Activated T-helper 1 cell treated with anti-CD3 and anti-CD28 coated beads, Interleukin-12 subunit alpha, Interleukin-12 subunit beta, Interleukin-2, Interleukin-4 antibody, amounts not matched to agents 30 ng/mL and 10 ng/mL and 1 ng/mL, durations not matched to agents 14 hours and 24 hours and 36 hours (primary cell): ENCODE measurements at regions of chr19 and their contacts with region 1.

Region 1: GRCh38 chr19:11558881-11559828 is at the start of gene ELOF1:
- DNase-seq: peak; percentile 97
- H3K4me3 Mint-ChIP-seq: peak within 1 kb of the TSS; percentile 92
- H3K27ac Mint-ChIP-seq: peak within 1 kb of the TSS; percentile 96
- H3K4me1 Mint-ChIP-seq: peaks cover 42% of the 10 kb centered on the region
- H3K27me3 Mint-ChIP-seq: no peaks in the 10 kb centered on the region
- total RNA-seq, gene ELOF1: 76.7 and 77.6 TPM in 2 replicates

Region 2: GRCh38 chr19:11528551-11529341 is 30.4 kb before region 1 on chr19 and contains the start of gene ECSIT:
- intact Hi-C with region 1: loop called (anchors 1 kb)
- DNase-seq: peak; percentile 89
- H3K4me3 Mint-ChIP-seq: peak within 1 kb of the TSS; percentile 95
- H3K27ac Mint-ChIP-seq: peak within 1 kb of the TSS; percentile 92
- H3K4me1 Mint-ChIP-seq: peaks cover 28% of the 10 kb centered on the region
- H3K27me3 Mint-ChIP-seq: no peaks in the 10 kb centered on the region
- total RNA-seq, gene ECSIT: 37.3 and 38.8 TPM in 2 replicates

Region 3: DNA sequence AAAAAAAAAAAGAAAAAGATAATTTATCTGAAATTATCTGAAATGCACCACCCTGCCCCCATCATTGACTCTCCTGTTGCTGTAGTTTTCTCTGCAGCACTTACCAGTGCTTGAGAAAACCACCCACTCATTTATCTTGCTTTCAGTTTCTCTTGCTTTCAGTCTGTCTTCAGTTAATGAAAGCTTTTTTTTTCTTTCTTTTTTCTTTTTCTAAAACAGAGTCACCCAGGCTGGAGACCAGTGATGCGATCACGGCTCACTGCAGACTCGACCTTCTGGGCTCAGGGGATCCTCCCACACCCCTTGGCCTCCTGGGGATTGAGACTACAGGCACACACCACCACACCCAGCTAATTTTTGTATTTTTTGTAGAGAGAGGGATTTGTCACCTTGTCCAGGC is 22.6 kb after region 1 on chr19:
- intact Hi-C with region 1: loop called (anchors 1 kb)
- DNase-seq: peak; percentile 24
- H3K4me3 Mint-ChIP-seq: peak overlapping the region; percentile 75
- H3K27ac Mint-ChIP-seq: peak overlapping the region; percentile 87
- H3K4me1 Mint-ChIP-seq: peaks cover 21% of the 10 kb centered on the region
- H3K27me3 Mint-ChIP-seq: no peaks in the 10 kb centered on the region

Region 4: GRCh38 chr19:11639602-11640471 is 80.7 kb after region 1 on chr19:
- intact Hi-C with region 1: loop called (anchors 1 kb)
- DNase-seq: peak; percentile 78
- H3K4me3 Mint-ChIP-seq: peak overlapping the region; percentile 77
- H3K27ac Mint-ChIP-seq: no peak overlapping the region
- H3K4me1 Mint-ChIP-seq: no peaks in the 10 kb centered on the region
- H3K27me3 Mint-ChIP-seq: no peaks in the 10 kb centered on the region